Mucosa of descending colon (tissue), 3 donors: ENCODE measurements at regions of chr10 and their contacts with region 1.

Region 1: DNA sequence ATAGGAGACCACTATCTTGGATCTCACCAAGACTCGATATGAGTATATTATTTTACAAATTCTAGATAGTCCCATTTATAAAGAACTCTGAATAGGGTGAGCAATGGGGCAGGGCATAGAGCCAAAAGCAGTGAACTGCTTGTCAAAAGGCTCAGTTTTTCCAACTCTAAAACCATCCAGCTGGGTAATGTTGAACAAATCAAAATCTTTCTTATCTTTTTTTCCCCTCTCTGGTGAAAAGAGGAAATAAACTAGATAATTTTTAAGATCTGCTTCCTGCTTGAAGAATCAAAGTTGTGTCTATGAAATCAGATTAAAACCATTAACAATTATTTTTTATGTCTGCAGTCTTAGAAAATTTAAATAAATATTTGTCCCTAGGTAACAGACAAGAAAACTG is 178.6 kb downstream of the REEP3 start:
- DNase-seq: no peak
- ATAC-seq: no peak
- H3K4me3 ChIP-seq: no peak overlapping the region
- H3K4me1 ChIP-seq: no peaks in the 10 kb centered on the region
- CTCF ChIP-seq: no peak

Region 2: GRCh38 chr10:63644418-63645142 is 55.2 kb before region 1 on chr10:
- intact Hi-C with region 1: loop called in 1 of 2 experiments (anchors 10 kb)
- DNase-seq: no peak
- ATAC-seq: no peak
- H3K4me3 ChIP-seq: no peak overlapping the region
- H3K4me1 ChIP-seq: no peaks in the 10 kb centered on the region
- CTCF ChIP-seq: no peak